ENCODE measurements at regions of chr4 and their contacts with region 1.

Region 1: GRCh38 chr4:39527273-39528060 is at the start of gene UGDH:
- DNase-seq: peak; percentile 99
- total RNA-seq, gene UGDH: 18.1 TPM

Region 2: DNA sequence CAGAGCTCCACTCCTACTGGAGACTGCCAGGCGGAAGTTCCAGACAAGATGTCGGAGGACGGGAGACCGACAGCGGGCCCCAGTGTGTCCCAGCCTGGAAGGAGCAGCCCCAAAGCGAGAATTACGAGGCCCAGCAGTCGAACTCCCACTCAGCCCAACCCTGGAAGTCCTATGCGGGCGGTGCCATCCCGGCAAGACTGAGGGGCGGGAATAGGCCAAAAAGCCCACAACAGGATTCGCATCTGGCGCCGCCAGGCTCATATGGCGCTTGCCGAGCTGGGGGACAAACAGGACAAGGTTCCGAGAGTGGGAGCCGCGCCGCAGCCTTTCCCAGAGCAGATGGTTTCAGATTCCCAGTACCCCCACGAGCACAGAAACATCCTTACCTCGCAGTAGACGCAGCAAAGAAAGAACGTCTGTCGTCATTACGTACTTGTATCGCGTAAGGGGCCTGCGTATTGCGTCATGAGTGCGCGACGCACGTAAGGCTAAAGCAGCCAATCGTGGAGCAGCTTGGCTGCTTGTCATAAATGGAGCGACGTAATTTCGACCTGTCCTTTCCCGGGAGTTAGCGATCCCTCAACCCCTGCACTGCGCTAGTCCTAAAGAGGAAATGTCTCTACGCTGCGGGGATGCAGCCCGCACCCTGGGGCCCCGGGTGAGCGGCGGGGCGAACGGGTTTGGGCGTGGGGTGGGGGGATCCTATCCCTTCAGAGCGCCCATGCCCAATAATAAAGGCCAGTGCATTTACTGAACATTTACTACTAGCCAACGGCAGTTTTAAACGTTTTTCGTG is 68.8 kb before region 1 on chr4 and contains the starts of genes LIAS and RPL9:
- intact Hi-C with region 1: loop called (anchors 5 kb)
- DNase-seq: peak; percentile 97
- total RNA-seq, gene LIAS: 15.2 TPM
- total RNA-seq, gene RPL9: 532 TPM

Region 3: GRCh38 chr4:39621582-39621981 is 94.1 kb after region 1 on chr4:
- intact Hi-C with region 1: loop called (anchors 5 kb)
- DNase-seq: no peak

Region 4: DNA sequence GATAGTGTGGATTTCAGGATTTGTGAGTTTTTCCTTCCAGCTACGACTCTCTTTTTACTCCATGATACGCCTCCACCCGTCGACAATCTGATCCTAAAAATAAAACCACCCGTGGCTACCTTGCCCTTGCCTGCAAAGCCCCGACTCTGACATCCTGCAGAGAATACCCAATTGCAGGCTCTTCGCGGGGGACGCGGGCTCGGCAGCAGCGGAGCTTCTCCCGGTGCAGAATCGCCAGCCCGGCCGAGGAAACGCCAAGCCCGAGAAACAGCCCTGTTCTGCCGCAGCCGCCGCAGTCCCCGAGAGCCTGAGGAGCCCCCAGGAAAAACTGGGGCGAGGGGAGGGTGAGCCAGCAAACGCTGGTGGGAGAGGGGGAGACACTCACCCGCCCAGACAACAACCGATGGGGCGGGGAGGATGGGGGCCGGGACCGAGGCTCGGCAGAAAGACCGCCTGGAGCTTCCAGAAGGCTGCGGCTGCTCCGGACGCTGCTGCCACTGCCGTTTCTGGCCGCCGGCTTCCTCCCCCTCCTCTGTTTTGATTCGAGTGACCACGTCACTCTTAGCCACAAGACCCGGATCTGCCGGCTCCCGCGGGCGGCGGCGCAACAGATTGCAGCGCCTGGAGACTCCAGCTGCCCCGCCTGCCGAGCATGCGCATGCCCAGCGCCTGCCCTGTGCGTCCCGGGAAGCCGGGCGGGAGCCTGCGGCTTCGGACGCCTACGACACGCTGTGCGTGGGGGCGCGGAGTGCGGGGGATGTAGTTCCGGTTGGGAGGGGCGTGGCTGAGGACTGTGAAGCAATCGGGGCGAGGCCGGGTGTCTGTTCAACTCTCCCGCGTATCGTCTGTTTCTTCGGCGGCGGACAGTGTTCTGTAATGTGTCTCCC is 111.1 kb after region 1 on chr4 and contains the start of gene SMIM14:
- intact Hi-C with region 1: loop called (anchors 1 kb)
- DNase-seq: peak; percentile 99
- total RNA-seq, gene SMIM14: 12.1 TPM

Region 5: GRCh38 chr4:39697740-39698423 is 170.4 kb after region 1 on chr4 and contains the start of gene UBE2K:
- intact Hi-C with region 1: loop called (anchors 2 kb)
- DNase-seq: peak; percentile 94
- total RNA-seq, gene UBE2K: 57.0 TPM

Region 6: DNA sequence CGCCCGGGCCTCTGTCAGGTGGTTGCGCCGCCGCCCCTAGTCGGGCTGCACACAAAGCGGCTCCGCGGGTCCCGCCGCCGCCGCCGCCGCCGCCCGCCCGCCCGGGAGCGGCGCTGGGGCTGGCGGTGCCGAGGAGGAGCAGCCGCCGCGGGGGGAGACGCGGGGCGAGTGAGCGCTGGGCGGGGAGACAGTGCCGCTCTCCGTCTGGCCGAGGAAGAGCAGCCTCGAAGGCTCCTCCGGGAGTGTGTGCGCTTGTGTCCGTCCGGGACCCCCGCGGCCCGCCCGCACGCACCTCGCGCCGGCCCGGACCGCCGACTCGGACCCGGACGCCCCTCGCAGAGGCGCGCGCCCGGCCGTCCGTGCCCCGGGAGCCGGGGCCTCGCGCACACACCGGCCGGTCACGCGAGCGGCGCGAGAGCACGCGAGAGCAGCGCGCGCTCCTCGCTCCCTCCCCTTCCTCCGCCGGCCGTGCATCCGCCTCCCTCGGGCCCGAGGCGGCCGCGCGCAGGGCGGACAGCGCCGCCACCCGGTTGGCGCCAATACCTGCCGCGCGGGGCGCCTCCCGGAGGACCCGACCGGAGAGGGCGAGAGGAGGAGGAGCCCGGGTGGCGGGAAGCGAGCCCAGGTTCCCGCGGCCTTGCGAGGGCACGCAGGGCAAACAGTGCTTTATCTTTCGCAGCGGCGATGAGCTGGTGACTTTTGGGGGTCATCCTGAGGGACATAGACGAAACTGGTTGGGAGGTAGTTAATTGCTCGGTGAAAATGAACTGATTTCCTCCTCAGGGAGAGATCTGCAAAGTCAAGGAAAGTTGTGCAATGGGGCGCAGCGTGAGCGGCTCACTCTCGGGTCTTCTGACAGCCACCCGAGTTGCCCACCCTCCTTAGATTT is 450.3 kb after region 1 on chr4 and contains the start of gene PDS5A:
- intact Hi-C with region 1: loop called (anchors 2 kb)
- DNase-seq: peak; percentile 95
- total RNA-seq, gene PDS5A: 33.1 TPM

Region 7: DNA sequence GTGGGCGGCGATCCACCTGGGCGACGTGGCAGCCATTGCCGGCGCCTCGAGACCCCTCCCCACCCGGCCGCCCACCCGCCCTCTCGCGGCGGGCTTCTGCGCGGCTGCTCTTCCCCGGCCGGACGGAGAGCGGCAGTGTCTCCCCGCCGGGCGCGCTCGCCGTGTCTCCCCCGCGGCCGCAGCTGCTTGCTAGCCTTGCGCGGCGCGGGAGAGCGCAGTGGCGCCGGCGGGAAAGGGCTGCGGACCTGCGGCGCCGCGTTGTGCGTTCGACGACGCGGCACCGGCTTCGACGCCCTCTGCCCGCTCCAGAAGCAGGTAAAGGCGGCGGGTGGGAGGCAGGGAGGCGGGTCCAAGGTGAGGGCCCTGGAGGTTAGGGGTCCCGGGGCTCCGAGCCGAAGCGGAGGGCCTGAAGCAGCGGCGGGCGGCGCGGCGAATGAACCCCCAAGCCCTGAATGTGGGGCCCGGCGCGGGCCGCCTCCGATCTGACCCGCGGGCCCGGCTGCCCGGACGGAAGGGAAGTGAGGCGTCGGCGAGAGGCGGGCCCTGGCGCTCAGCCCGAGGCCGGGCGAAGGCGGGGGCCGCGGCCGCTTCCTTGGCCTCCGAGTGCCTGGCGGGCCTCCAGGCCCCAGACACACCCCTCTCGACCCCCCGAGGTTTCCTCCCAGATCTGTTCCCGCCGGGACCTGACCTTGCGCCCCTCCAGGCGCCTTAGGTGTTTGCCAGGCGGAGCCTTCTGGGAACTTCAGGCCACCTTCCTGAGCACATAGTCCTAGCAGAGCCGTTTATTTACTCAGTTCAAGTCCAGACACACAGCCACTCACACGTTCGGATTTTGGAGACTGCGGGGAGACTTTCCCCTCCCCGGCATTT is 529.5 kb after region 1 on chr4 and contains the start of gene N4BP2:
- intact Hi-C with region 1: loop called (anchors 5 kb)
- DNase-seq: peak; percentile 90
- total RNA-seq, gene N4BP2: 5.2 TPM